MCF 10A (cell line): ENCODE measurements at regions of chr2 and their contacts with region 1.

Region 1: DNA sequence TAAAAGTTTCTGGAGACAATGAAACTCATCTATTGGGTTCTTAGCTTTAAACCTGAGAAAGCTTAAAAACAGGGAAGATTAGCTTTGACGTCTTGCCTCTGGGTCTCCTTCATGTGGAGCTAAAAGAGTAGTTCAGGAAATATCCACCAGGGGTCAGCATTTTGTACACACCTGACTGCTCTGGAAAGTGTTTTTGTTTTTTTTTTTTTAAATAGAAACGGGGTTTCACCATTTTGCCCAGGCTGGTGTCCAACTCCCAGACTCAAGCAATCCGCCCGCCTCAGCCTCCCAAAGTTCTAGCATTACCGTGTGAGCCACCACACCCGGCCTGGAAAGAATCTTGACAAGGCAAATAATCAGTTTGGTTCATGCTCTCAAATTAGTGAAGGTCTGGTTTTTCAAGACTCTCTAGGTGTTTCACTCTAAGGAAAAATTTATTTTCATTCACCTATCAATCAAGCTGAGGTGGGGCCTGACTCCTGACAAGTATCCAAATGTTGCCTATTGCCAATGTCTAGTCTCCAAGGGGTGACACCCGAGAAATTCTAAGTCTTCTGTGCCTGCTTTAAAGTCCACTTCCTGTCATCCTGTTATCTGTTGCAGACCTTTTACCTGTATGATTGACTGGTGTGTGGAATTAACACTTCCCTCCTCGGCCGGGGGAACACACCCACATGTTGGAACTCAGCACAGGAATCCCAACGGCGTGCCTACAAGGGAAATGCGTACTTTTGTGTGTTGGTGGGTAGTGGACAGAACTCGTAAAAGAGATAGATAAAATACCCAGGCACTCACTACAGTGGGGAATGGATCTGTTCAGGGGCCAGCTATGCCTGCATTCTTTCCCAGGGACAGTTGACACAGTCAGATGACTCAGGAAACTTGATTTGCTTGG is 11.3 kb downstream of the IL1RN start:
- DNase-seq: peak; percentile 85
- H3K4me3 Mint-ChIP-seq: no peak overlapping the region
- H3K27ac Mint-ChIP-seq: no peak overlapping the region
- H3K4me1 Mint-ChIP-seq: peaks cover 6% of the 10 kb centered on the region
- H3K27me3 Mint-ChIP-seq: no peaks in the 10 kb centered on the region
- CTCF ChIP-seq: peak; percentile 74

Region 2: DNA sequence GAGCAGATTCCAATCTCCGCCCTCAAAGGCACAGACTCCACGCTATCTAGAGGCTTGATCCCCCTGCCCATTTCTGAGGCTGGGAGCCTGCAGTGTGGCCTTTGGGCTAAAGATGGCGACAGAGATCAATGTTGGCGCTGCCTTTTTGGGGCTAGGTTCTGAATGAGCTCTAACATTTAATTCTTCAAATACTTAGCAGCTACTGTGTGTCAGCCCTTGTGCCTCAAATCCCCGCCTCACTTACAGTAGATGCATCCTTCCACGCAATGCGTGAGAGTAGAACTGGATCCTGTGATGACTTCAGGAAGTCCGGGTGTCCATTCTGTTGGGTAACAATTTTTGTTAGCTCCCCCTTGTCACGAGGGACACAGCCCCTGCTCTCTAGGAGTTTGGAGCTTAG is 58.5 kb before region 1 on chr2:
- CTCF ChIA-PET with region 1: interaction called, 198 read pairs
- POLR2A ChIA-PET with region 1: interaction called, 15 read pairs
- intact Hi-C with region 1: loop called (anchors 2 kb)
- DNase-seq: peak; percentile 62
- H3K4me3 Mint-ChIP-seq: no peak overlapping the region
- H3K27ac Mint-ChIP-seq: no peak overlapping the region
- H3K4me1 Mint-ChIP-seq: peaks cover 36% of the 10 kb centered on the region
- H3K27me3 Mint-ChIP-seq: no peaks in the 10 kb centered on the region
- CTCF ChIP-seq: peak; percentile 86

Region 3: GRCh38 chr2:113117541-113118262 is 21.0 kb before region 1 on chr2:
- CTCF ChIA-PET with region 1: interaction called, 69 read pairs
- POLR2A ChIA-PET with region 1: interaction called, 3 read pairs
- intact Hi-C with region 1: no loop called
- DNase-seq: peak; percentile 94
- H3K4me3 Mint-ChIP-seq: no peak overlapping the region
- H3K27ac Mint-ChIP-seq: peak overlapping the region; percentile 81
- H3K4me1 Mint-ChIP-seq: peaks cover 13% of the 10 kb centered on the region
- H3K27me3 Mint-ChIP-seq: no peaks in the 10 kb centered on the region
- CTCF ChIP-seq: no peak

Region 4: DNA sequence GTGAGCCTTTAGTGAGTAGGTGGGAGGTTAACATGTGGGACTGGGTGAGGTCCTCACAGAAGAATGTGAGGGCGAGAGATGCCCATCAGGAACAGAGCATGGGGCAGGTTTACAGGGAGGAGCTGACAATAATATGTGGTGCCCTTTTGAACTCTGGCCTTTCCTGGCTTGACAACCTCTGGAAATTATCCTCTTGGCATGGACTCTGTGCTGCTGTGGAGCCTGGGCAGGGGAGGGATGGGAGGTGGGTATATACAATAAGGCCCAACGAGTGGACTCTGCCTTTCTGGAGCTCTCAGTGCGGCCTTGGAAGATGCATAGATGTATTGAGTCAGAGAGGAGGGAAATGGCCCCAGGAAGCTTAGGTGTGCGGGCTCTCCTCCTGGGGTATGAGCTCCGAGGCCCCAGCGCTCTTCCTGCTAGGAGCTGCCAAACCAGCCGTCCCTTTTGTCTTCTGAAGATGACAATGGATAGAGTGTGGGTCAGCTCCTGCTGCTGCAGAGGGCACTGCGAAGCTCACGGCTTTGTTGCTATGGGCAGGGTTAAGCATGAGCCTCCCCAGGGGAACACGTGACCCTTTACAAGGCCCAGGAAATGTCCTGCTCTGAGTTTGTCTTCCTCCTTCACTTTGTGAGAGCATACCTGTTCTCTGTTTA is 26.4 kb after region 1 on chr2:
- CTCF ChIA-PET with region 1: interaction called, 45 read pairs
- POLR2A ChIA-PET with region 1: no interaction called
- intact Hi-C with region 1: no loop called
- DNase-seq: no peak
- H3K4me3 Mint-ChIP-seq: no peak overlapping the region
- H3K27ac Mint-ChIP-seq: no peak overlapping the region
- H3K4me1 Mint-ChIP-seq: peaks cover 17% of the 10 kb centered on the region
- H3K27me3 Mint-ChIP-seq: no peaks in the 10 kb centered on the region
- CTCF ChIP-seq: no peak

Region 5: GRCh38 chr2:113203901-113204519 is 65.3 kb after region 1 on chr2:
- CTCF ChIA-PET with region 1: interaction called, 179 read pairs
- POLR2A ChIA-PET with region 1: interaction called, 29 read pairs
- intact Hi-C with region 1: loop called (anchors 1 kb)
- DNase-seq: peak; percentile 81
- H3K4me3 Mint-ChIP-seq: no peak overlapping the region
- H3K27ac Mint-ChIP-seq: peak overlapping the region; percentile 25
- H3K4me1 Mint-ChIP-seq: peaks cover 12% of the 10 kb centered on the region
- H3K27me3 Mint-ChIP-seq: no peaks in the 10 kb centered on the region
- CTCF ChIP-seq: peak; percentile 92

Region 6: GRCh38 chr2:113248997-113249770 is 110.5 kb after region 1 on chr2:
- CTCF ChIA-PET with region 1: interaction called, 28 read pairs
- POLR2A ChIA-PET with region 1: no interaction called
- intact Hi-C with region 1: loop called (anchors 1 kb)
- DNase-seq: peak; percentile 86
- H3K4me3 Mint-ChIP-seq: no peak overlapping the region
- H3K27ac Mint-ChIP-seq: no peak overlapping the region
- H3K4me1 Mint-ChIP-seq: peaks cover 15% of the 10 kb centered on the region
- H3K27me3 Mint-ChIP-seq: no peaks in the 10 kb centered on the region
- CTCF ChIP-seq: peak; percentile 92

Region 7: DNA sequence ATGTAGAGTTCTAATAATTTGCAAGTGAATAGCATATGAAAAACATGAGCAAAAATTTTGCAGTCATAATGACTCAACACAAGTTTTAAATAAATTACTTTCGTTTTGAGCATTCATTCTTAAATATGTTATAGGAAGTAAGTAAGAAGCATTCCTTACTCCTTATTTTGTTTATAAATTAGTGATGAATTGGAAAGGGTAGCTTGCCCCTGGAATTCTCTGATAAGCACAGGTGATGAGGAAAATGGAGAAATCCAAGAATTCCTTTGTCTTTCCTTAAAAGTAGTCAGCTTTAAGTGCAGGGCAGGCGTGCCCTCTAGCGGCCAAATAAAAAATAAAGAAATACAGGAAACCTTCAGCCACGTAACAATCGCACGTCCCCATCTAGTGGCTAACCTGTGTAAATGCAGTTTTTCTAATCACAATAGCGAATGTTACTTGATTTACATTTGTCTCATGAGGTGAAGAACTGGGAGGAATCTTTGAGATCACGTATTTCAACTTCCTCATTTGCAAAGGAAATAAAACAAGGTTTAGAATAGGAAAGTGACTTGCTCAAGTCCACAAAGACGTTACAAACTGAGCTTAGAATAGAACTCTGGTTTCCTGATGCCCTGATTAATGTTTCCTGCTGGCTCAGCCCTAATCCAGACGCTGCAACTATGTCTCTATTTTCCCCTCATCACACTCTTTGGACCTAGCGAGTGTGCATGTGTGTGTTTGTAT is 251.6 kb after region 1 on chr2:
- CTCF ChIA-PET with region 1: interaction called, 70 read pairs
- POLR2A ChIA-PET with region 1: interaction called, 10 read pairs
- intact Hi-C with region 1: loop called (anchors 2 kb)
- DNase-seq: peak; percentile 78
- H3K4me3 Mint-ChIP-seq: no peak overlapping the region
- H3K27ac Mint-ChIP-seq: no peak overlapping the region
- H3K4me1 Mint-ChIP-seq: no peaks in the 10 kb centered on the region
- H3K27me3 Mint-ChIP-seq: no peaks in the 10 kb centered on the region
- CTCF ChIP-seq: peak; percentile 85